PC-3 (cell line): ENCODE measurements at regions of chr7 and their contacts with region 1.

Region 1: GRCh38 chr7:107865956-107866775 is 24.8 kb upstream of the DLD start:
- DNase-seq: peak; percentile 81
- ATAC-seq: peak; percentile 92
- H3K4me3 ChIP-seq: peak overlapping the region; percentile 55
- H3K27ac ChIP-seq: peak overlapping the region; percentile 93
- H3K4me1 ChIP-seq: peaks cover 19% of the 10 kb centered on the region
- H3K27me3 ChIP-seq: no peaks in the 10 kb centered on the region
- CTCF ChIP-seq: no peak

Region 2: GRCh38 chr7:107486041-107486440 is 380.1 kb before region 1 on chr7:
- CTCF ChIA-PET with region 1: no interaction called
- POLR2A ChIA-PET with region 1: interaction called, 13 read pairs
- intact Hi-C with region 1: no loop called
- DNase-seq: no peak
- ATAC-seq: no peak
- H3K4me3 ChIP-seq: no peak overlapping the region
- H3K27ac ChIP-seq: no peak overlapping the region
- H3K4me1 ChIP-seq: no peaks in the 10 kb centered on the region
- H3K27me3 ChIP-seq: no peaks in the 10 kb centered on the region
- CTCF ChIP-seq: no peak